ENCODE measurements at regions of chr10 and their contacts with region 1.

Region 1: DNA sequence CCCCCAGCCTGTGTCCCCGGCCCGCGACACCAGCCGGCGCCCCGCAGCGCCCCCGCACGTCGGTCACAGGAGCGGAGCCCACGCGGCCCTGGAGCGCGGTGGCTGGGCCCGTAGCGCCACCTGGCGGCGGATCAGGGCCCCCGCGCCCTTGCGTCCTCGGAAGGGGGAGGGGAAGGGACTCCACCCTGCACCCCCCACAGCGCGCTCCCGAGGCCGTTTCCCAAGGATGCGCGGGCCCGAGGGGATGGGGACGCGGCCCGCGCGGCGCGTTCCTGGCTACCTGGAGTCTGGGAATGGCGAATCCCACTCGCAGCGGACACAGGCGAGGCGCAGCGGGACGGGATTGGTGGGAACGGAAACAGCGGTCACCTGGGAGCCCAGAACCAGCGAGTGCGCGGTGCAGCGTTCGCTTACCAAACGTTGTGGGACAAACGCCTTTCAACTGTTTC is 23.8 kb upstream of the MKI67 start:
- DNase-seq: peak; percentile 70 to 85 (median 81)
- H3K4me3 ChIP-seq: peak overlapping the region in 1 of 2 donors; percentile 91
- H3K4me3 Mint-ChIP-seq: peak overlapping the region; percentile 60 to 78 (median 67)
- H3K27ac ChIP-seq: no peak overlapping the region
- H3K27ac Mint-ChIP-seq: peak overlapping the region in 1 of 7 donors; percentile 18
- H3K4me1 ChIP-seq: peaks cover 3% of the 10 kb centered on the region
- H3K4me1 Mint-ChIP-seq: peaks cover 4 to 15% (median 9%) of the 10 kb centered on the region in 4 donors
- H3K27me3 ChIP-seq: no peaks in the 10 kb centered on the region
- H3K27me3 Mint-ChIP-seq: peaks cover 2 to 3% of the 10 kb centered on the region in 2 donors

Region 2: DNA sequence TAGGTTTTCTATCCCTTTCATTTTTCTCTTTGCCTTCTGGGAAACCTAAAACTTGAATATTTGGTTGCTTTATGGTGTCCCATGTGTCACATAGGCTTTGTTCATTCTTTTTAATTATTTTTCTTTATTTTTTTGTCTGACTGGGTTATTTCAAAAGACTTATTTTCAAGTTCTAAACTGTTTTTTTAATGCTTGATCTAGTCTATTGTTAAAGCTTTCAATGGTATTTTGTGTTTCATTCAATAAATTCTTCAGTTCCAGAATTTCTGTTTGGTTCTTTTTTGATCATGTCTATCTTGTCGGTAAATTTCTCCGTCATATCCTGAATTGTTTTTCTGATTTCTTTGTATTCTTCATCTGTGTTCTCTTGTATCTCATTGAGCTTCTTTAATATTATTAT is 514.2 kb before region 1 on chr10:
- CTCF ChIA-PET with region 1: no interaction called
- POLR2A ChIA-PET with region 1: no interaction called
- intact Hi-C with region 1: no loop called
- DNase-seq: no peak
- H3K4me3 ChIP-seq: no peak overlapping the region
- H3K4me3 Mint-ChIP-seq: no peak overlapping the region
- H3K27ac ChIP-seq: no peak overlapping the region
- H3K27ac Mint-ChIP-seq: no peak overlapping the region
- H3K4me1 ChIP-seq: no peaks in the 10 kb centered on the region
- H3K4me1 Mint-ChIP-seq: no peaks in the 10 kb centered on the region
- H3K27me3 ChIP-seq: no peaks in the 10 kb centered on the region
- H3K27me3 Mint-ChIP-seq: no peaks in the 10 kb centered on the region

Region 3: DNA sequence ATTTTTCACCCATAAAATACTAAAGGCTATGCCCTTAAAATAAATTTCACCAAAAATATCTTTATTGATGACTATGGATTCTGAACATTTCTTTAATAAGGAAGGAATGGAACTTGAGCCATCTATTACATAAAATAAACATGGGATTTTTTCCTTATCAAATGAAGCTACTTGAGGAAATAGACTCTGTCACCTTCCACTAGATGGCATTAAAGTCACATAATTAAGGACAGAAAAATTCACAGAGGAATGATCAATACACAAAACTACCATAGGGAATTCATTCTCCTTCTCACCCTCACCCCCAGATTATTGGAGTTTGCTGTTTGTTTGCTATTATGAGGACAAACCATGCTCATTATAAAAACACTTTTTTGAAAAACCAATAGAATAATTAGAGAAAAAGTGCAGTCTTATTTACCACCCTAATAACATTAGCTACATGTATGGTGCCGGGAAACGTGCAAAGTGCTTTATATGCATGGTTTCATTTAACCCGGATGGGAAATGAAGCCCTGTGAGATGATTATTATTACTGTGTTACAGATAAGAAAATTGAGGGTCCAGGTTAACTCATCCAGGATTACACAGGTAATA is 434.2 kb before region 1 on chr10:
- CTCF ChIA-PET with region 1: no interaction called
- POLR2A ChIA-PET with region 1: no interaction called
- intact Hi-C with region 1: loop called (anchors 5 kb)
- DNase-seq: peak in 1 of 5 donors; percentile 3
- H3K4me3 ChIP-seq: no peak overlapping the region
- H3K4me3 Mint-ChIP-seq: no peak overlapping the region
- H3K27ac ChIP-seq: no peak overlapping the region
- H3K27ac Mint-ChIP-seq: no peak overlapping the region
- H3K4me1 ChIP-seq: no peaks in the 10 kb centered on the region
- H3K4me1 Mint-ChIP-seq: no peaks in the 10 kb centered on the region
- H3K27me3 ChIP-seq: no peaks in the 10 kb centered on the region
- H3K27me3 Mint-ChIP-seq: peaks cover 0 to 4% of the 10 kb centered on the region in 2 donors

Region 4: DNA sequence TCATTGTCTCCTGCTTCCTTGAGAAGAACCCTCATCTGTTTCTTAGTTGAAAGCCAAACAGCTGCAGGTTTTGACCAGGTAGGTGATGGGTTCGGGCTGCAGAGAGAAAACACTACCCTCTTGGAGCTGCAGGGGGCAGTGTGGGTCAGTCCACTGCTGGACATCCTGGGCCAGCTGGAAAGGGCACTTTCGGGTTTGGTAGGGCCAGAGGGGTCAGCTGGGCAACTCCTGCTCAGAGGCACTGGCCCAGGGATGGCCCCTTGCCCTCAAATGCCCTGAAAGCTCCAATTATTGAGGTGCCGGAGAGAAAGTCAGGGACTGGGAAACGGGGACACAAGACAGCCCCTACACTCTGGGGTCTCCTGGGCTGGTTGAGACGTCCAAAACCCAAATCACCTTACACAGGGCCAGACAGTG is 114.5 kb before region 1 on chr10:
- CTCF ChIA-PET with region 1: interaction called, 11 read pairs
- POLR2A ChIA-PET with region 1: no interaction called
- intact Hi-C with region 1: loop called (anchors 1 kb)
- DNase-seq: peak; percentile 43 to 64 (median 52)
- H3K4me3 ChIP-seq: no peak overlapping the region
- H3K4me3 Mint-ChIP-seq: no peak overlapping the region
- H3K27ac ChIP-seq: no peak overlapping the region
- H3K27ac Mint-ChIP-seq: no peak overlapping the region
- H3K4me1 ChIP-seq: no peaks in the 10 kb centered on the region
- H3K4me1 Mint-ChIP-seq: peaks cover 0 to 4% (median 2%) of the 10 kb centered on the region in 4 donors
- H3K27me3 ChIP-seq: no peaks in the 10 kb centered on the region
- H3K27me3 Mint-ChIP-seq: no peaks in the 10 kb centered on the region

Region 5: GRCh38 chr10:128125944-128126764 is 23.9 kb before region 1 on chr10 and contains the start of gene MKI67:
- CTCF ChIA-PET with region 1: interaction called, 10 read pairs
- POLR2A ChIA-PET with region 1: no interaction called
- intact Hi-C with region 1: loop called (anchors 1 kb)
- DNase-seq: peak; percentile 87 to 92 (median 88)
- H3K4me3 ChIP-seq: peak within 1 kb of the TSS; percentile 70 to 71
- H3K4me3 Mint-ChIP-seq: peak within 1 kb of the TSS; percentile 90 to 96 (median 93)
- H3K27ac ChIP-seq: peak within 1 kb of the TSS; percentile 72
- H3K27ac Mint-ChIP-seq: peak within 1 kb of the TSS; percentile 71 to 95 (median 90)
- H3K4me1 ChIP-seq: peaks cover 42% of the 10 kb centered on the region
- H3K4me1 Mint-ChIP-seq: peaks cover 11 to 37% (median 30%) of the 10 kb centered on the region in 4 donors
- H3K27me3 ChIP-seq: peaks cover 12% of the 10 kb centered on the region
- H3K27me3 Mint-ChIP-seq: peaks cover 6 to 20% of the 10 kb centered on the region in 2 donors
- total RNA-seq, gene MKI67: 0.17 to 0.93 TPM

Region 6: DNA sequence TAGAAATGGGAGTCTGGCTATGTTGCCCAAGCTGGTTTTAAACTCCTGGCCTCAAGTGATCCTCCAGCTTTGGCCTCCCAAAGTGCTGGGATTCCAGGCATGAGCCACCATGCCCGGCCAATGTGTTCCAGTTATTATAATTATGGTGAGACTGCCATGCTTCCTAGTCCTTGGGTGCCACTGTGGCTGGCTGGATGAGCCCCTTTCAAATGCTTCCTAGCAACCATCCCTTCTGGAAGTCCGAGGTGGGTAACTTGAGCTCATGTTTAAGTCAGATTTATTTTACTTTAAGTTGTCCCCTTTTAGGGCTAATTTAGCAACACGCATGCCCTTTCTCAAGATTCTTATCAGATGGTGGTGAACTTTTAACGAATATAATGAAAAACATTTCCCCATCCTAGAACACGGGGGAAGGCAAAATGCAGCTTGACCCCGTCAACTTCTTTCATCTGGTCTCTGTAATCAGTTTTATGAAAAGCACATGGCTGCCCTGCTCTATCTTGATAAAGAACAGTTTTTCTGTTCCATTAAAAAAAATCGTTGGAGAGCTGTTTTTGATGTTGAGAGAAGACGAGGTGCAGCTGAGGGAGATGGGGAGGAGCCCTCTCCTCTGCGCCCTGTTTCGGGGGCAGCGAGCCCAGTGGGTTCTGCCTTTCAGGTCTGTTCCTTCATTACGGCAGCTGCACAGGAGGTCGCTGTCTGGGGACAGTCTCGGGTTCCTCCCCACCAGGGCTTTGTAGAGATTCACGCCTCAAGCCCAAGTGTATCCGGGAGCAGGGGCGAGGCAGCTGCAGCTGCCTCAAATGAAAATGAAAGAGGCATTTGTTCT is 37.1 kb after region 1 on chr10:
- CTCF ChIA-PET with region 1: interaction called, 16 read pairs
- POLR2A ChIA-PET with region 1: interaction called, 3 read pairs
- intact Hi-C with region 1: no loop called
- DNase-seq: peak in 3 of 5 donors; percentile 24 to 37 (median 28)
- H3K4me3 ChIP-seq: peak overlapping the region; percentile 34 to 46
- H3K4me3 Mint-ChIP-seq: peak overlapping the region; percentile 85 to 93 (median 88)
- H3K27ac ChIP-seq: peak overlapping the region; percentile 50
- H3K27ac Mint-ChIP-seq: peak overlapping the region; percentile 87 to 97 (median 92)
- H3K4me1 ChIP-seq: peaks cover 13% of the 10 kb centered on the region
- H3K4me1 Mint-ChIP-seq: peaks cover 23 to 44% (median 31%) of the 10 kb centered on the region in 4 donors
- H3K27me3 ChIP-seq: no peaks in the 10 kb centered on the region
- H3K27me3 Mint-ChIP-seq: no peaks in the 10 kb centered on the region

Region 7: GRCh38 chr10:128624656-128625530 is 474.8 kb after region 1 on chr10:
- CTCF ChIA-PET with region 1: no interaction called
- POLR2A ChIA-PET with region 1: no interaction called
- intact Hi-C with region 1: no loop called
- DNase-seq: no peak
- H3K4me3 ChIP-seq: no peak overlapping the region
- H3K4me3 Mint-ChIP-seq: no peak overlapping the region
- H3K27ac ChIP-seq: no peak overlapping the region
- H3K27ac Mint-ChIP-seq: peak overlapping the region in 1 of 7 donors; percentile 45
- H3K4me1 ChIP-seq: no peaks in the 10 kb centered on the region
- H3K4me1 Mint-ChIP-seq: no peaks in the 10 kb centered on the region
- H3K27me3 ChIP-seq: no peaks in the 10 kb centered on the region
- H3K27me3 Mint-ChIP-seq: no peaks in the 10 kb centered on the region

Region 8: DNA sequence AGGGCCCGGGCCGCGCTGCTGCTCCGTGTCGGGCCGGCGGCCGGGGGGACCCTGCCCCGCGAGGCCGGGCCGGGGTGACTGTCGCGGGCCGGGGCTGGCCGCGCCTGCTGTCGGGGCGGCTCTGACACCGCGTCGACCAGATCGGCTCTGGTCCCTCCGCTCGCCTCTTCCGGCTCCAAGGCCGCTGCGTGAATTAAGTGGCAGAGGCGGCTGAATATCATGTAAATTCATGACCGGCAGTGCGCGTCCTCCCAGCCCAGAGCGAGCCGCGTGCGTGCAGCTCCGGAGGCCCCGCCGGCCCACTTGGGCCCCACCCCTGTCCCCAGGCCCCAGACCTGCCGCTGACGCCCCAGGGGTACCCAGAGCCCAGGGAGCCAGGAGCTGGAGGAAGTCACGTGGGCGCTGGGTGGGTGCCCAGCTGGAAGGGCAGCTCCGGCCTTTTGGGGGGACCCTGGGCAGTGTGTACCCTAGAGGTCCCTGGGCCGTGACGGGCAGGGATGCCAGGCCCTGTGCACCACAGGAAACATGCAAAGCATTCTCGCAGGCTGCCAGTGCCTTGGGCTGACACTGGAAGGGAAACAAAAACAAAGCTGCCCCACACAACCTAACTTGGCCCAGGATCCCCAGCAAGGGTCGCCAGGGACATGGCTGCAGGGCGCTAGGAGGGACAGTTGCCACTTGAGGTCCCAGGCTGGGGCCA is 560.2 kb after region 1 on chr10:
- CTCF ChIA-PET with region 1: no interaction called
- POLR2A ChIA-PET with region 1: no interaction called
- intact Hi-C with region 1: no loop called
- DNase-seq: no peak
- H3K4me3 ChIP-seq: no peak overlapping the region
- H3K4me3 Mint-ChIP-seq: no peak overlapping the region
- H3K27ac ChIP-seq: no peak overlapping the region
- H3K27ac Mint-ChIP-seq: no peak overlapping the region
- H3K4me1 ChIP-seq: no peaks in the 10 kb centered on the region
- H3K4me1 Mint-ChIP-seq: no peaks in the 10 kb centered on the region
- H3K27me3 ChIP-seq: no peaks in the 10 kb centered on the region
- H3K27me3 Mint-ChIP-seq: peaks cover 2 to 6% of the 10 kb centered on the region in 2 donors

Region 9: GRCh38 chr10:128727114-128727513 is 577.0 kb after region 1 on chr10:
- CTCF ChIA-PET with region 1: no interaction called
- POLR2A ChIA-PET with region 1: no interaction called
- intact Hi-C with region 1: no loop called
- DNase-seq: no peak
- H3K4me3 ChIP-seq: no peak overlapping the region
- H3K4me3 Mint-ChIP-seq: no peak overlapping the region
- H3K27ac ChIP-seq: no peak overlapping the region
- H3K27ac Mint-ChIP-seq: no peak overlapping the region
- H3K4me1 ChIP-seq: no peaks in the 10 kb centered on the region
- H3K4me1 Mint-ChIP-seq: no peaks in the 10 kb centered on the region
- H3K27me3 ChIP-seq: no peaks in the 10 kb centered on the region
- H3K27me3 Mint-ChIP-seq: no peaks in the 10 kb centered on the region

Measured in CD4-positive, alpha-beta memory T cell (primary cell).